B cell (primary cell): ENCODE measurements at regions of chr6 and their contacts with region 1.

Region 1: GRCh38 chr6:70221025-70221714 is 81.7 kb downstream of the COL9A1 start:
- DNase-seq: peak; percentile 42
- ATAC-seq: peak; percentile 39
- H3K4me3 ChIP-seq: no peak overlapping the region
- H3K4me3 Mint-ChIP-seq: no peak overlapping the region
- H3K27ac ChIP-seq: no peak overlapping the region
- H3K27ac Mint-ChIP-seq: no peak overlapping the region
- H3K4me1 ChIP-seq: peaks cover 6 to 9% of the 10 kb centered on the region in 2 donors
- H3K4me1 Mint-ChIP-seq: peaks cover 8% of the 10 kb centered on the region
- H3K27me3 ChIP-seq: no peaks in the 10 kb centered on the region
- H3K27me3 Mint-ChIP-seq: peaks cover 7% of the 10 kb centered on the region
- CTCF ChIP-seq: peak; percentile 94

Region 2: GRCh38 chr6:69678834-69679233 is 542.3 kb before region 1 on chr6:
- CTCF ChIA-PET with region 1: no interaction called
- POLR2A ChIA-PET with region 1: no interaction called
- intact Hi-C with region 1: no loop called
- DNase-seq: no peak
- ATAC-seq: no peak
- H3K4me3 ChIP-seq: no peak overlapping the region
- H3K4me3 Mint-ChIP-seq: no peak overlapping the region
- H3K27ac ChIP-seq: no peak overlapping the region
- H3K27ac Mint-ChIP-seq: no peak overlapping the region
- H3K4me1 ChIP-seq: no peaks in the 10 kb centered on the region
- H3K4me1 Mint-ChIP-seq: no peaks in the 10 kb centered on the region
- H3K27me3 ChIP-seq: no peaks in the 10 kb centered on the region
- H3K27me3 Mint-ChIP-seq: no peaks in the 10 kb centered on the region
- CTCF ChIP-seq: no peak

Region 3: GRCh38 chr6:70208235-70208790 is 12.9 kb before region 1 on chr6:
- CTCF ChIA-PET with region 1: interaction called, 10 read pairs
- POLR2A ChIA-PET with region 1: no interaction called
- intact Hi-C with region 1: no loop called
- DNase-seq: no peak
- ATAC-seq: no peak
- H3K4me3 ChIP-seq: no peak overlapping the region
- H3K4me3 Mint-ChIP-seq: no peak overlapping the region
- H3K27ac ChIP-seq: no peak overlapping the region
- H3K27ac Mint-ChIP-seq: no peak overlapping the region
- H3K4me1 ChIP-seq: no peaks in the 10 kb centered on the region
- H3K4me1 Mint-ChIP-seq: no peaks in the 10 kb centered on the region
- H3K27me3 ChIP-seq: no peaks in the 10 kb centered on the region
- H3K27me3 Mint-ChIP-seq: no peaks in the 10 kb centered on the region
- CTCF ChIP-seq: no peak

Region 4: GRCh38 chr6:70231311-70231710 is 10.1 kb after region 1 on chr6:
- CTCF ChIA-PET with region 1: interaction called, 20 read pairs
- POLR2A ChIA-PET with region 1: no interaction called
- intact Hi-C with region 1: no loop called
- DNase-seq: no peak
- ATAC-seq: no peak
- H3K4me3 ChIP-seq: no peak overlapping the region
- H3K4me3 Mint-ChIP-seq: no peak overlapping the region
- H3K27ac ChIP-seq: no peak overlapping the region
- H3K27ac Mint-ChIP-seq: no peak overlapping the region
- H3K4me1 ChIP-seq: no peaks in the 10 kb centered on the region
- H3K4me1 Mint-ChIP-seq: no peaks in the 10 kb centered on the region
- H3K27me3 ChIP-seq: no peaks in the 10 kb centered on the region
- H3K27me3 Mint-ChIP-seq: no peaks in the 10 kb centered on the region
- CTCF ChIP-seq: no peak

Region 5: DNA sequence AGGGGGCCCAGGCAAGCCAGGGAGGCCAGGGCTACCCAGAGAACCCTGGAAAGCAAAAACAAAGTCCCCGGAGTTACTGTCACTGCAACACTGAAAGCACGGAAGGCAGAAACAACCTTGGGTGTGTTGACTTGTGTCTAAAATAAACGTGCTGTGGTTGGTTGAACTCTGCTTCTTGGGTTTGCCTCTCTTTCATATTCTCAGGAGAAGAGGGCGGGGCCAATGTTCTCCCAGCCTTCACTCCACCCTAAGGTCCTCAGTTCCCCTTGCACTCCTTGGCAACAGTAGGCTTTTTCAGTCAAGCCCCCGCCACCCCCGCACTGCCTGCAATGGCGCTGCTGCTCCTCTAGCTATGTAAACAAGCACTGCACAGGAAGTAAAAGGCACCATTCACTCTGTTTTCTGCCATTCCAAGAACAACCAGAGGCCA is 20.8 kb after region 1 on chr6:
- CTCF ChIA-PET with region 1: interaction called, 11 read pairs
- POLR2A ChIA-PET with region 1: no interaction called
- intact Hi-C with region 1: no loop called
- DNase-seq: no peak
- ATAC-seq: no peak
- H3K4me3 ChIP-seq: no peak overlapping the region
- H3K4me3 Mint-ChIP-seq: no peak overlapping the region
- H3K27ac ChIP-seq: no peak overlapping the region
- H3K27ac Mint-ChIP-seq: no peak overlapping the region
- H3K4me1 ChIP-seq: no peaks in the 10 kb centered on the region
- H3K4me1 Mint-ChIP-seq: no peaks in the 10 kb centered on the region
- H3K27me3 ChIP-seq: no peaks in the 10 kb centered on the region
- H3K27me3 Mint-ChIP-seq: peaks cover 16% of the 10 kb centered on the region
- CTCF ChIP-seq: no peak

Region 6: DNA sequence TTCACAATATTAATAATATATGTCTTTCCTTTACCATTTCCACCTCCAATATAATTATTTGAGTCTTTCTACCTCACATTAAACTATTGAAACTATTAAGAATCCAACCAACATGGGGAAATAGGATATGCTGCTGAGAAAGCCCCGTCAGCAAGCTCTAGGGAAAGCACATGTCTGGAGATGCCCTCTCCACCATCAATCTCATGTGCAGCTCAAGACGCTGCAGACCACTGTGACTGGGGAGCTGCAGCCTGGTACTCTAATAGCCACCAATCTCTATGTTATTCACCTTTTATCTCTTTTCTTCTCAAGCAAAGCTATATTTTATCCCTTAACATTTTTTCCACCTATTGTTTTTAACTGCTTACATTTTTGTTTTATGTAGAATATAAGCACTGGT is 31.4 kb after region 1 on chr6:
- CTCF ChIA-PET with region 1: no interaction called
- POLR2A ChIA-PET with region 1: no interaction called
- intact Hi-C with region 1: no loop called
- DNase-seq: no peak
- ATAC-seq: no peak
- H3K4me3 ChIP-seq: no peak overlapping the region
- H3K4me3 Mint-ChIP-seq: no peak overlapping the region
- H3K27ac ChIP-seq: no peak overlapping the region
- H3K27ac Mint-ChIP-seq: no peak overlapping the region
- H3K4me1 ChIP-seq: no peaks in the 10 kb centered on the region
- H3K4me1 Mint-ChIP-seq: no peaks in the 10 kb centered on the region
- H3K27me3 ChIP-seq: peaks cover 0 to 4% (median 0%) of the 10 kb centered on the region in 4 experiments
- H3K27me3 Mint-ChIP-seq: peaks cover 18% of the 10 kb centered on the region
- CTCF ChIP-seq: no peak

Region 7: GRCh38 chr6:70369332-70369950 is 148.3 kb after region 1 on chr6:
- CTCF ChIA-PET with region 1: interaction called, 37 read pairs
- POLR2A ChIA-PET with region 1: no interaction called
- intact Hi-C with region 1: loop called (anchors 1 kb)
- DNase-seq: peak; percentile 73
- ATAC-seq: peak; percentile 78
- H3K4me3 ChIP-seq: no peak overlapping the region
- H3K4me3 Mint-ChIP-seq: no peak overlapping the region
- H3K27ac ChIP-seq: no peak overlapping the region
- H3K27ac Mint-ChIP-seq: no peak overlapping the region
- H3K4me1 ChIP-seq: no peaks in the 10 kb centered on the region
- H3K4me1 Mint-ChIP-seq: peaks cover 4% of the 10 kb centered on the region
- H3K27me3 ChIP-seq: peaks cover 0 to 2% (median 0%) of the 10 kb centered on the region in 4 experiments
- H3K27me3 Mint-ChIP-seq: peaks cover 32% of the 10 kb centered on the region
- CTCF ChIP-seq: peak; percentile 84

Region 8: GRCh38 chr6:70955441-70956190 is 734.4 kb after region 1 on chr6:
- CTCF ChIA-PET with region 1: interaction called, 22 read pairs
- POLR2A ChIA-PET with region 1: no interaction called
- intact Hi-C with region 1: no loop called
- DNase-seq: peak; percentile 85
- ATAC-seq: peak; percentile 95
- H3K4me3 ChIP-seq: peak overlapping the region in 4 of 5 experiments; percentile 36 to 66 (median 50)
- H3K4me3 Mint-ChIP-seq: peak overlapping the region; percentile 82
- H3K27ac ChIP-seq: no peak overlapping the region
- H3K27ac Mint-ChIP-seq: no peak overlapping the region
- H3K4me1 ChIP-seq: peaks cover 22 to 24% of the 10 kb centered on the region in 2 donors
- H3K4me1 Mint-ChIP-seq: peaks cover 26% of the 10 kb centered on the region
- H3K27me3 ChIP-seq: peaks cover 0 to 41% (median 19%) of the 10 kb centered on the region in 4 experiments
- H3K27me3 Mint-ChIP-seq: peaks cover 58% of the 10 kb centered on the region
- CTCF ChIP-seq: peak; percentile 85

Region 9: DNA sequence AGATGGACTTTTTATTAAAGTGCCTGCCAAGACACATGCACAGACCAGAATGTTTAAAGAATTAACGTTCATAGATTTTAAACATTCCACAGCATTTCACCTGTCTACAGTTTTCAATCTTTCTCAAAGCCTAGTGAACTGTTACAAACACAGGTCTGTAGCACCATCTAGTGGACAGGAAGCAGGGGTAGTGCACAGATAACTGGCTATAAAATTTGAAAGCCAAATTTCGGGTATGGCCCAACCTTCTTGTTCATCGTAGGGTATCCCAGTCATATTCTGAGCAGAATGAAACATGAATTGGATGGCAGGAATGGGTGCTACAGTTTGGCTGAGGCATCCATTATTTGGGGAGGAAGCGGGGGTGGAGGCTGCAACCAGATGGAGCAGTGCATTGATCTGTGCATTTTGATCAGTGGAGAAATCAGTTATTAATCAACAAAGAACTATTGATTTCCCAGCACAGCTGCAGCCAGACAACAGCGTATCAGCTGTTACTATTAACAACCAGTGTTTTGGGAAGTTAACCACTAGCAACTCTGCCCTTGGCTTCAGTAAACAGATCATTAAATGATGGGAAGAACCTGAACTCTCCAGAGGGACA is 791.8 kb after region 1 on chr6:
- CTCF ChIA-PET with region 1: interaction called, 22 read pairs
- POLR2A ChIA-PET with region 1: no interaction called
- intact Hi-C with region 1: no loop called
- DNase-seq: peak; percentile 64
- ATAC-seq: no peak
- H3K4me3 ChIP-seq: no peak overlapping the region
- H3K4me3 Mint-ChIP-seq: no peak overlapping the region
- H3K27ac ChIP-seq: no peak overlapping the region
- H3K27ac Mint-ChIP-seq: no peak overlapping the region
- H3K4me1 ChIP-seq: peaks cover 0 to 3% of the 10 kb centered on the region in 2 donors
- H3K4me1 Mint-ChIP-seq: peaks cover 2% of the 10 kb centered on the region
- H3K27me3 ChIP-seq: peaks cover 0 to 13% (median 0%) of the 10 kb centered on the region in 4 experiments
- H3K27me3 Mint-ChIP-seq: peaks cover 14% of the 10 kb centered on the region
- CTCF ChIP-seq: peak; percentile 84